ENCODE measurements at regions of chr15 and their contacts with region 1.

Region 1: DNA sequence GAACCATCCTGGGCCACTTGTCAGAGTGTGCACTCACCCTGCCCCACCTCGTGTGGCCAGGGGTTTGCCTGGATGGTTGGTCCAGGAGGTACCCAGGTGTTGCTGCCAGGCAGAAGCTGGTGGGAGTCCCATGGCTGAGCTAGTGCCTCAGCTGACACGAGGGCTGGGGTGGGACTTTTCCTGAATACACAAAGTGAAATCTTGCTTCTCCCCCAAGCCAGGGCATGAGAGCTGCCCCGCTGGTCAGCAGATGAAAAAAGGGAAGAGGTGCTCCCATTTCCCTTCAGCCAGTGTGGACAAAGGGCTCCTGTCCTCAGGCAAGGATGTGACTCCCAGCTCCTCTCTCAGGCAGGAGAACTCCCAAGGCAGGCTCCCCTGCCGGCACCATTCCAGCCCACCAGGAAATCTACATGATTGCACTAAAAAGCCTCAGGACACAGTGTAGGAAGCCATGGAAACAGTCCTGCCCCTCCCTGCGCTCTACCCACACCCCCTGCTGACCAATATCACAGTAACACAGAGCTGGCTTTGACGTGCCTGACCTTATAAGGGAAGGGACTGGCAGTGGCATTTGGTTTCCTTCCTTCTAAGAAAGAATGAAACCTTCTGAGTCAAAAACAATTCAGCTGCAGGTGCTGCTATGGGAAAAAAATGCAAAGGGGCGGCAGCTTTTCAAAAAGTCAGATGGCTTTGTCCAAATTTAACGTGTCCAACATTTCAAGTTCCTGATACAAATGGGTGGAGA is 33.9 kb downstream of the MYO5C start:
- DNase-seq: peak in 10 of 14 experiments; percentile 4 to 86 (median 26)
- ATAC-seq: peak; percentile 92
- H3K4me3 ChIP-seq: no peak overlapping the region
- H3K4me3 Mint-ChIP-seq: peak overlapping the region; percentile 17
- H3K27ac ChIP-seq: peak overlapping the region in 1 of 2 donors; percentile 68
- H3K27ac Mint-ChIP-seq: peak overlapping the region; percentile 48
- H3K4me1 ChIP-seq: peaks cover 42% of the 10 kb centered on the region
- H3K4me1 Mint-ChIP-seq: peaks cover 37% of the 10 kb centered on the region
- H3K27me3 ChIP-seq: no peaks in the 10 kb centered on the region
- H3K27me3 Mint-ChIP-seq: no peaks in the 10 kb centered on the region
- CTCF ChIP-seq: no peak

Region 2: DNA sequence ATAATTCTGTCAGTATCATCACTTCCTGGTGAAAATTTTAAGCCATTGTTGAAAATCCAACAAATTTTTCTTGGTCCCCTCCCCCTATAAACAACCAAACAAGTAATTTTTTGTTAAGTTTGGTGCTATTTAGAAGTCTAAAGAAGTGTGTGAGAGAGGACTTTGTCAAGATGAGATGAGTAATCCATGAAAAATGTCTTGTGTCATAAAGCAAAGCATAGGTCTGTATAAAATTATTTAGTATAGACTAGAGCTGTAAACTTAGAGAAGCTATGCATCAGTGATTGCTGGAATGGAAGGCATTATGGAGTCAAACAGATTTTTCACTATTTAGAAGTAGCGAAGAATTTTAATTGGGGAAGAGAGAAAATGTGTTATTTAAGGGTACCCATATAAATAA is 211.3 kb before region 1 on chr15:
- CTCF ChIA-PET with region 1: no interaction called
- POLR2A ChIA-PET with region 1: no interaction called
- intact Hi-C with region 1: no loop called
- DNase-seq: no peak
- ATAC-seq: no peak
- H3K4me3 ChIP-seq: no peak overlapping the region
- H3K4me3 Mint-ChIP-seq: no peak overlapping the region
- H3K27ac ChIP-seq: no peak overlapping the region
- H3K27ac Mint-ChIP-seq: no peak overlapping the region
- H3K4me1 ChIP-seq: peaks cover 6% of the 10 kb centered on the region
- H3K4me1 Mint-ChIP-seq: peaks cover 31% of the 10 kb centered on the region
- H3K27me3 ChIP-seq: no peaks in the 10 kb centered on the region
- H3K27me3 Mint-ChIP-seq: no peaks in the 10 kb centered on the region
- CTCF ChIP-seq: no peak

Region 3: GRCh38 chr15:52281085-52282035 is 19.7 kb after region 1 on chr15:
- CTCF ChIA-PET with region 1: no interaction called
- POLR2A ChIA-PET with region 1: no interaction called
- intact Hi-C with region 1: no loop called
- DNase-seq: no peak
- ATAC-seq: no peak
- H3K4me3 ChIP-seq: no peak overlapping the region
- H3K4me3 Mint-ChIP-seq: no peak overlapping the region
- H3K27ac ChIP-seq: no peak overlapping the region
- H3K27ac Mint-ChIP-seq: no peak overlapping the region
- H3K4me1 ChIP-seq: no peaks in the 10 kb centered on the region
- H3K4me1 Mint-ChIP-seq: no peaks in the 10 kb centered on the region
- H3K27me3 ChIP-seq: no peaks in the 10 kb centered on the region
- H3K27me3 Mint-ChIP-seq: no peaks in the 10 kb centered on the region
- CTCF ChIP-seq: no peak

Region 4: GRCh38 chr15:52308446-52309153 is 46.9 kb after region 1 on chr15:
- CTCF ChIA-PET with region 1: no interaction called
- POLR2A ChIA-PET with region 1: no interaction called
- intact Hi-C with region 1: loop called in 1 of 2 experiments (anchors 5 kb)
- DNase-seq: no peak
- ATAC-seq: no peak
- H3K4me3 ChIP-seq: no peak overlapping the region
- H3K4me3 Mint-ChIP-seq: no peak overlapping the region
- H3K27ac ChIP-seq: no peak overlapping the region
- H3K27ac Mint-ChIP-seq: no peak overlapping the region
- H3K4me1 ChIP-seq: no peaks in the 10 kb centered on the region
- H3K4me1 Mint-ChIP-seq: peaks cover 6% of the 10 kb centered on the region
- H3K27me3 ChIP-seq: no peaks in the 10 kb centered on the region
- H3K27me3 Mint-ChIP-seq: no peaks in the 10 kb centered on the region
- CTCF ChIP-seq: no peak

Region 5: GRCh38 chr15:52337198-52337853 is 75.7 kb after region 1 on chr15:
- CTCF ChIA-PET with region 1: interaction called, 3 read pairs
- POLR2A ChIA-PET with region 1: no interaction called
- intact Hi-C with region 1: loop called in 1 of 2 experiments (anchors 2 kb)
- DNase-seq: no peak
- ATAC-seq: no peak
- H3K4me3 ChIP-seq: no peak overlapping the region
- H3K4me3 Mint-ChIP-seq: no peak overlapping the region
- H3K27ac ChIP-seq: no peak overlapping the region
- H3K27ac Mint-ChIP-seq: no peak overlapping the region
- H3K4me1 ChIP-seq: no peaks in the 10 kb centered on the region
- H3K4me1 Mint-ChIP-seq: no peaks in the 10 kb centered on the region
- H3K27me3 ChIP-seq: no peaks in the 10 kb centered on the region
- H3K27me3 Mint-ChIP-seq: no peaks in the 10 kb centered on the region
- CTCF ChIP-seq: no peak

Region 6: GRCh38 chr15:52673312-52673711 is 411.6 kb after region 1 on chr15:
- CTCF ChIA-PET with region 1: no interaction called
- POLR2A ChIA-PET with region 1: no interaction called
- intact Hi-C with region 1: loop called (anchors 5 to 10 kb)
- DNase-seq: no peak
- ATAC-seq: no peak
- H3K4me3 ChIP-seq: no peak overlapping the region
- H3K4me3 Mint-ChIP-seq: no peak overlapping the region
- H3K27ac ChIP-seq: no peak overlapping the region
- H3K27ac Mint-ChIP-seq: no peak overlapping the region
- H3K4me1 ChIP-seq: peaks cover 11% of the 10 kb centered on the region
- H3K4me1 Mint-ChIP-seq: peaks cover 62% of the 10 kb centered on the region
- H3K27me3 ChIP-seq: no peaks in the 10 kb centered on the region
- H3K27me3 Mint-ChIP-seq: no peaks in the 10 kb centered on the region
- CTCF ChIP-seq: no peak

Measured in CD4-positive, alpha-beta T cell (primary cell).